Caco-2 (cell line): ENCODE measurements at regions of chr1 and their contacts with region 1.

Region 1: DNA sequence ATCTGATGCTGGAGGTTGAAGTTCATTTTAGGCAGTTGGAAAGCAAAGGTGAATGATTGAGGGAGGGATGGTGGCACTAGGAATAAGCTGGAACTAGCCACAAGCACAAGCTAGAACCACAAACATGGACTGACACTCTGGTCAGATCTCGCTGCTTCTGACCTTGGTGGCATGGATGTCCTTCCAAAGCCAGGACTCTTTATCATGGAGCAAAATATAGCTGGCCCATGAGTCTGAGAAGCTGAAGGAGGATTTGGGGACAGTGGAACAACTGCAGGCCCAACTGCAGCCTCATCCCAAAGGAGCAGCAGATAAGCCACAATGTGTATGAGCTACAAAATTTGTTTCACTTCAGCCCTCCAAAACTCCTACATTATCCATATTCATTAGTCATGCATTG is 35.5 kb downstream of the SRSF11 start:
- DNase-seq: no peak
- H3K4me3 ChIP-seq: no peak overlapping the region
- H3K4me3 Mint-ChIP-seq: no peak overlapping the region
- H3K27ac Mint-ChIP-seq: no peak overlapping the region
- H3K4me1 ChIP-seq: no peaks in the 10 kb centered on the region
- H3K4me1 Mint-ChIP-seq: no peaks in the 10 kb centered on the region
- H3K27me3 ChIP-seq: no peaks in the 10 kb centered on the region
- H3K27me3 Mint-ChIP-seq: no peaks in the 10 kb centered on the region
- CTCF ChIP-seq: no peak

Region 2: GRCh38 chr1:70284366-70284765 is 27.7 kb after region 1 on chr1:
- CTCF ChIA-PET with region 1: no interaction called
- POLR2A ChIA-PET with region 1: no interaction called
- intact Hi-C with region 1: loop called (anchors 1 kb)
- DNase-seq: no peak
- H3K4me3 ChIP-seq: no peak overlapping the region
- H3K4me3 Mint-ChIP-seq: no peak overlapping the region
- H3K27ac Mint-ChIP-seq: no peak overlapping the region
- H3K4me1 ChIP-seq: no peaks in the 10 kb centered on the region
- H3K4me1 Mint-ChIP-seq: peaks cover 15% of the 10 kb centered on the region
- H3K27me3 ChIP-seq: no peaks in the 10 kb centered on the region
- H3K27me3 Mint-ChIP-seq: no peaks in the 10 kb centered on the region
- CTCF ChIP-seq: no peak